CD8-positive, alpha-beta T cell (primary cell): ENCODE measurements at regions of chr1 and their contacts with region 1.

Region 1: DNA sequence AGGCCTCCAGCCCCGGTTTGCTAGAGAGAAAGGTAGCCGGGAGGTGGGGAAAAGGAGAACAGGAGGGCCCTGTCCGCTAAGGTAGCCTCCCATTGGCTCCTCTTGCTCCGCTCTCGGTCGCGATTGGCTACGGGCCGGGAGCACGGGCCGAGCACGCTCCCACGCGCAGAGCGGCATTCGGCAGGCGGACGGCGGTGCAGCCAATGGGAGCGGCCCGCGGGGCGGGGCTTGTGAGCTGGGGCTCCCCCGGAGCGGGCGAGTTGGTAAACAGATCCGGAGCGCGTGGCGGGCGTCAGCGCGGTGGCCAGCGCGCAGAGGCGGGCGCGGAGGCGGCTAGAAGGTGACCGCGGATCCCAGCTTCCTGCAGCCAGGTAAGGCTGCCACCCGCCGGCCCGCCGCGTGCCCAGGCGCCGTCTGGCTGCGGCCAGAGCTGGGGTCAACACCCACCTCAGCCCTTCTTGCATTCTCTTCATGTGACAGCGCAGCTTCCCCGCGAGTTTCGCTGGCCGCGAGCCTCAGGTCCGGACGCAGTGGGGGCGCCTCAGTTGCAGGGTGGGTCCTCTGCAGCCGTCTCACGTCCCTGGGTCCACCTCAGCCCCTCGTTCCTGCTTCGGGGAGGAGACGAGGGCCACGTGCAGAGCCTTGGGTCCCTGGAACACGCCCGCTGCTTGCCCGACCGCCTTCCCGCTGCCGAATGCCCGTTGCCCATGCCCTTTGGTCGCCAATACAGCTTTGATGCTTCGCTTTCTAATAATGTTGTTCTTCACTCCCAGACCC is at the start of gene COQ8A:
- DNase-seq: peak; percentile 97 to 100 (median 99)
- ATAC-seq: peak; percentile 90
- H3K4me3 ChIP-seq: peak within 1 kb of the TSS; percentile 92 to 93
- H3K4me3 Mint-ChIP-seq: peak within 1 kb of the TSS; percentile 88
- H3K27ac ChIP-seq: peak within 1 kb of the TSS; percentile 93 to 97
- H3K27ac Mint-ChIP-seq: peak within 1 kb of the TSS; percentile 97
- H3K4me1 ChIP-seq: peaks cover 38% of the 10 kb centered on the region
- H3K4me1 Mint-ChIP-seq: peaks cover 49% of the 10 kb centered on the region
- H3K27me3 ChIP-seq: no peaks in the 10 kb centered on the region
- H3K27me3 Mint-ChIP-seq: no peaks in the 10 kb centered on the region
- CTCF ChIP-seq: no peak
- total RNA-seq, gene COQ8A: 82.6 to 90.0 TPM

Region 2: DNA sequence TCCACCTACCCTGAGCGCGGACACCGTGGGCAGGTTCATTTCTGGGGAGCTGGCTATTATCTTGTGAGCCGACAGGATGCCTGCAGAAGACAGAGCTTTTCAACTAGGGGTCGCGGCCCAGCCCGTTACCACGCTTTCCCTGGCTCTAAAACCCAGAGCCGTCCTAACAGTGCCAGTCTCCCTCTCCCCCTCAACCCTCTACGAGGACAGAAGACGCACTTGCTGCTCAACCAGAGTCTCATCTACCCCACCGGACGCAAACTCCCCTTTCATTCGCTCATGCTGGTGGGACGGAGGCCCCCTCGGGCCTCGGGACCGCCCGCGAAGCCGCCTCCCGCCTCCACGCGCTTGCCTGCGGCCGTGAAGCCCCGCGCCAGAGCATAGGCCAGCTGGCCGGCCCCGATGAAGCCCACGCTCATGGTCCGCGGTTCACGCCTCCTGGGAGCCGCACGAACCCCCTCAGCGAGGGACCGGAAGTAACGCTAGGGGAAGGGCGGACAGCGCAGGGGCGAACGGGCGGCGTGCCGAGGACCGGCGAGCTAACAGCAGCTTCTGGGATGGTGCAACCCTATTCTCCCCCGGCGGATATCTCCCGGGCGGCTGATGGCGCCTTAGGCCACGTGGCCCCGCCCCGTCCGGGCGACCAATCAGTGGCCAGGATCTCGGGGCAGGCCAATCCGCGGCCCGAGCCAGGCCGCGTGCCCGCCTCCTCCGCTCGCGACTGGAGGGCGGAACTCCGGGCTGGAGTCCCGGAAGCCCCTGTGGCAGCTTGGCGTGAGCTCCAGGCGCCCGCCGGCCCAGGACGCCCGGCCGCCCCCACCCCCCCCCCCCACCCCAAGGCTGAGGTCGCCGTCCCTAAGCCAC is 1016.3 kb before region 1 on chr1 and contains the start of gene PYCR2:
- CTCF ChIA-PET with region 1: no interaction called
- POLR2A ChIA-PET with region 1: no interaction called
- intact Hi-C with region 1: loop called in 1 of 2 experiments (anchors 10 kb)
- DNase-seq: peak; percentile 90 to 98 (median 92)
- ATAC-seq: peak; percentile 98
- H3K4me3 ChIP-seq: peak within 1 kb of the TSS; percentile 75 to 79
- H3K4me3 Mint-ChIP-seq: peak within 1 kb of the TSS; percentile 94
- H3K27ac ChIP-seq: peak within 1 kb of the TSS; percentile 75 to 91
- H3K27ac Mint-ChIP-seq: peak within 1 kb of the TSS; percentile 93
- H3K4me1 ChIP-seq: peaks cover 75% of the 10 kb centered on the region
- H3K4me1 Mint-ChIP-seq: peaks cover 63% of the 10 kb centered on the region
- H3K27me3 ChIP-seq: no peaks in the 10 kb centered on the region
- H3K27me3 Mint-ChIP-seq: no peaks in the 10 kb centered on the region
- CTCF ChIP-seq: no peak
- total RNA-seq, gene PYCR2: 27.3 to 30.6 TPM

Region 3: DNA sequence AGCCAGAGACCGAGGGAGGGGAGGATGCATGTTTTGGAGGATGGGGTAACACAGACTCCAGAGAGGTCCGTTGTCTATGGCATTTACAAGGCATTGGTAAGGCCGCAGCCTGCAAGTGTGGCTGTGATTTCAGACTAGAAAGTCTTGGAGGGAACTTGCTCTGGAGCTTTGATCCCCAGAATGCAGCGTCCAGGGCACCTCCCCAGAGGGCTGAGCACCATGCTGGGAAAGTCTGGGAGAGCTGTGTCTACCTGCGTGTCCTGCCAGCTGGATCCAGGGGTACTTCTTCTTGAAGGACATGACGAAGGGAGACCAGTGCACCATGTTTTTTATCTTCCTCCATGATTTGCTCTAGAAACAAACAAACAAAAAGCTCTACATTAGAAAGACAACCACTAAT is 291.8 kb before region 1 on chr1:
- CTCF ChIA-PET with region 1: no interaction called
- POLR2A ChIA-PET with region 1: no interaction called
- intact Hi-C with region 1: no loop called
- DNase-seq: no peak
- ATAC-seq: no peak
- H3K4me3 ChIP-seq: no peak overlapping the region
- H3K4me3 Mint-ChIP-seq: no peak overlapping the region
- H3K27ac ChIP-seq: no peak overlapping the region
- H3K27ac Mint-ChIP-seq: peak overlapping the region; percentile 69
- H3K4me1 ChIP-seq: peaks cover 65% of the 10 kb centered on the region
- H3K4me1 Mint-ChIP-seq: peaks cover 70% of the 10 kb centered on the region
- H3K27me3 ChIP-seq: no peaks in the 10 kb centered on the region
- H3K27me3 Mint-ChIP-seq: no peaks in the 10 kb centered on the region
- CTCF ChIP-seq: no peak

Region 4: DNA sequence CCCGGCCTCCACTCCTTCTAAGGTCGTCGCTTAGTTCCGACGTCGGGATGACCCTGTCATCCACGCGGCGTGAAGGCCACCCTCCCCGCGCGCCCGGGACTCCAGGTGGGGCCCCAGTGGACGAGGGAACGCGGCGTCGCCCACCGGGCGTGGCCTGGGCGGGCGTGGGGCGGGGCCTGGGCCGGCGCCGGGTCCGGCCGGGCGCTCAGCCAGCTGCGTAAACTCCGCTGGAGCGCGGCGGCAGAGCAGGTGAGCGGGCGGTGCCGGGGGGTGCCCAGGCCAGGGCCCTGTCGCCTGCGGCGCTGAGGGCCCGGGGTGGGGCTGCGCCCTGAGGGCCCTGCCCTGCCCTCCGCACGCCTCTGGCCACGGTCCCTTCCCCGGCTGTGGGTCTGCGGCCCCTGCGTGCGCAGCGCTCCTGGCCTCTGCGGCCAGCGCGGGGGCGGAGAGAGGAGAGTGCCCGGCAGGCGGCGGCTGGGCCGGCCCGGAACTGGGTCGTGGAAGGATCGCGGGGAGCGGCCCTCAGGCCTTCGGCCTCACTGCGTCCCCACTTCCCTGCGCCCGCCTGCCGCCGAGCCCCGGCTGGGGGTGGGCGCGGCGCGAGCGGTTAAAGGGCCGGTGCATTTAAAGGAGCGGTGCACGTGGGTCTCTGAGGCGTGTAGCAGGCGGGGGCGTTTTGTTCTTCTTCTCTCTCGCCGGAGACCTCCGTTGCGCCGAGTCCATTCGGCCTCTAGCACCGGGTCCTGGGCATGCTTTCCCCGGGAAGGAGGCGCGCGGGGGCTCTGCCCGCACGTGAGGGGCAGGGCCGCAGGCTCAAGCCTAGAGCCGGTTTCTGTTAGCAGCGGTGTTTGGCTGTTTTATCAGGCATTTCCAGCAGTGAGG is 69.6 kb before region 1 on chr1 and contains the start of gene PSEN2:
- CTCF ChIA-PET with region 1: interaction called, 3 read pairs
- POLR2A ChIA-PET with region 1: interaction called, 4 read pairs
- intact Hi-C with region 1: loop called in 1 of 2 experiments (anchors 2 kb)
- DNase-seq: peak in 7 of 9 experiments; percentile 44 to 75 (median 58)
- ATAC-seq: peak; percentile 85
- H3K4me3 ChIP-seq: peak within 1 kb of the TSS; percentile 52 to 64
- H3K4me3 Mint-ChIP-seq: peak within 1 kb of the TSS; percentile 83
- H3K27ac ChIP-seq: no peak within 1 kb of the TSS
- H3K27ac Mint-ChIP-seq: no peak within 1 kb of the TSS
- H3K4me1 ChIP-seq: peaks cover 8% of the 10 kb centered on the region
- H3K4me1 Mint-ChIP-seq: peaks cover 14% of the 10 kb centered on the region
- H3K27me3 ChIP-seq: no peaks in the 10 kb centered on the region
- H3K27me3 Mint-ChIP-seq: peaks cover 13% of the 10 kb centered on the region
- CTCF ChIP-seq: no peak
- total RNA-seq, gene PSEN2: 1.00 to 1.7 TPM

Region 5: DNA sequence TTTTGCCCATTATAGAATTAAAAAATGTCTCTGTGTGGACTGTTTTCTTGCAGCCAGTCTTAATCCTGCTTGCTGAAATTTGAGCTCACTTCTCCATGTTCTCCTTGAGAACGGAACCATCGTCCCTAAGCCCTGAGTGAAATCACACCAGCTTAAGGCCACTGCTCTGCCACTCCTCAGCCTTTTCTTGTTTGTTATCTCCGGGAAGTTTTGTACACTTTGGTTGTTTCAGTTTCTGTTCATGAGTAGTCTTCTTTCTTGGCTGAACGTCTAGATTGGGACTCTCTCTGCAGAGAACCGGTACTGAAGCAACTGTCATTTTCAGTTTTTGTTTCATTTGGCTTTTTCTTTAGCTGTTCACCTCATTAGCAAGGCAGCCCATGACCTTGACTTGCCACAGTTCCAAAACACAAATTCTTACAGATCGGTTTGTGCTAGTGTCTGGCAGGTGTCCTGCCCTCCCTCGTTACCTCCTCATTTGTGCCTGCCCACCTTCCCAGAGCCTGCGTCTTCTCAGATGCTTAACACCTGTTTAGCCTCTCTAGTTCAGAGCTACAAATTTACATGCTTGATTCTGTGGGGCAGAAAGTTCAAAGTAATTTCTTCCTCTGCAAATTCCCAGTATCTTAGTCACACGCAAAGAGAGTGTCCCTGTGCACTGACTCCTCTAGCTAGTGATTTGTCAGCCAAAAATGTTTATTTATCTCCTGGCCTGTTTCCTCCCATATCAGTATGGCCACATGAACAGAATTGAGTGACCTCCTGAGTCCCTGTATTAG is 57.4 kb before region 1 on chr1:
- CTCF ChIA-PET with region 1: interaction called, 3 read pairs
- POLR2A ChIA-PET with region 1: interaction called, 39 read pairs
- intact Hi-C with region 1: loop called in 1 of 2 experiments (anchors 5 kb)
- DNase-seq: peak in 6 of 9 experiments; percentile 3 to 75 (median 36)
- ATAC-seq: peak; percentile 84
- H3K4me3 ChIP-seq: peak overlapping the region; percentile 38 to 42
- H3K4me3 Mint-ChIP-seq: peak overlapping the region; percentile 72
- H3K27ac ChIP-seq: peak overlapping the region; percentile 49 to 86
- H3K27ac Mint-ChIP-seq: peak overlapping the region; percentile 85
- H3K4me1 ChIP-seq: peaks cover 43% of the 10 kb centered on the region
- H3K4me1 Mint-ChIP-seq: peaks cover 43% of the 10 kb centered on the region
- H3K27me3 ChIP-seq: no peaks in the 10 kb centered on the region
- H3K27me3 Mint-ChIP-seq: no peaks in the 10 kb centered on the region
- CTCF ChIP-seq: no peak

Region 6: DNA sequence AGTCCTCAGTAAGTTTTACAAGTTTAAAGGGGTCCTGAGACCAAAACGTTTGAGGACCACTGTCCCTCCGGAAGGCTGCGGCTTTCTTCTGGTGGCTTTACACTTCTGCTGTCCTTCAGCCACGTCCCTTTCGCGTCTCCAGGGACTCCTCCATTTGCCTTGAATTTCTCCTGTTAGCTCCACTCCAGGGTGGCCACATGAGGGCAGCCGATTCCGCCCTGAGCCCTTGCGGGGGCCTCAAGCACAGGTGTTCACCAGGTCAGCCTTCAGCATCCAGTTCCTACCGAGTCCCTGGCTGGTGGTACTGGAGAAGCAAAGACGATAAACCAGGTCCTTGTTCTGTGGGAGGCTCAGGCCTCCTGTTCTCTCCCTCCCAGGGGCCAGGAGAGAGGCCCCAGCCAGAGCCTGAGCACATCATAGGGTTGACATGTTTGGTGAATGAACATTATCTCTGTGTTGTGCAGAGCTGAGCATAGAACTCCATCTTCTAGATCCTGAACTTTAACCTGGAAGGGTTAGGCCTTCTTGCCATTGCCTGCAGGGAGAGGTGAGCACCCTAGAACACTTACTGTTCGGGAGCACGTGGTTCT is 27.5 kb before region 1 on chr1:
- CTCF ChIA-PET with region 1: interaction called, 4 read pairs
- POLR2A ChIA-PET with region 1: interaction called, 4 read pairs
- intact Hi-C with region 1: loop called in 1 of 2 experiments (anchors 2 kb)
- DNase-seq: peak in 8 of 9 experiments; percentile 25 to 72 (median 46)
- ATAC-seq: peak; percentile 29
- H3K4me3 ChIP-seq: no peak overlapping the region
- H3K4me3 Mint-ChIP-seq: no peak overlapping the region
- H3K27ac ChIP-seq: no peak overlapping the region
- H3K27ac Mint-ChIP-seq: no peak overlapping the region
- H3K4me1 ChIP-seq: no peaks in the 10 kb centered on the region
- H3K4me1 Mint-ChIP-seq: no peaks in the 10 kb centered on the region
- H3K27me3 ChIP-seq: no peaks in the 10 kb centered on the region
- H3K27me3 Mint-ChIP-seq: no peaks in the 10 kb centered on the region
- CTCF ChIP-seq: no peak

Region 7: GRCh38 chr1:227563324-227564201 is 623.3 kb after region 1 on chr1 and contains the start of gene ZNF678:
- CTCF ChIA-PET with region 1: no interaction called
- POLR2A ChIA-PET with region 1: no interaction called
- intact Hi-C with region 1: loop called (anchors 5 to 10 kb)
- DNase-seq: peak; percentile 71 to 95 (median 86)
- ATAC-seq: peak; percentile 95
- H3K4me3 ChIP-seq: peak within 1 kb of the TSS; percentile 81 to 87
- H3K4me3 Mint-ChIP-seq: peak within 1 kb of the TSS; percentile 90
- H3K27ac ChIP-seq: peak within 1 kb of the TSS; percentile 76 to 83
- H3K27ac Mint-ChIP-seq: peak within 1 kb of the TSS; percentile 93
- H3K4me1 ChIP-seq: peaks cover 7% of the 10 kb centered on the region
- H3K4me1 Mint-ChIP-seq: peaks cover 47% of the 10 kb centered on the region
- H3K27me3 ChIP-seq: peaks cover 4 to 17% of the 10 kb centered on the region in 2 experiments
- H3K27me3 Mint-ChIP-seq: peaks cover 26% of the 10 kb centered on the region
- CTCF ChIP-seq: no peak
- total RNA-seq, gene ZNF678: 2.9 to 3.2 TPM

Region 8: GRCh38 chr1:227787513-227788270 is 847.5 kb after region 1 on chr1:
- CTCF ChIA-PET with region 1: no interaction called
- POLR2A ChIA-PET with region 1: no interaction called
- intact Hi-C with region 1: loop called in 1 of 2 experiments (anchors 5 kb)
- DNase-seq: peak; percentile 92 to 98 (median 95)
- ATAC-seq: peak; percentile 93
- H3K4me3 ChIP-seq: peak overlapping the region; percentile 75 to 97
- H3K4me3 Mint-ChIP-seq: peak overlapping the region; percentile 83
- H3K27ac ChIP-seq: peak overlapping the region in 1 of 2 experiments; percentile 52
- H3K27ac Mint-ChIP-seq: peak overlapping the region; percentile 71
- H3K4me1 ChIP-seq: peaks cover 21% of the 10 kb centered on the region
- H3K4me1 Mint-ChIP-seq: peaks cover 21% of the 10 kb centered on the region
- H3K27me3 ChIP-seq: peaks cover 0 to 5% of the 10 kb centered on the region in 2 experiments
- H3K27me3 Mint-ChIP-seq: no peaks in the 10 kb centered on the region
- CTCF ChIP-seq: no peak